ENCODE measurements at regions of chr3 and their contacts with region 1.

Region 1: GRCh38 chr3:107216711-107217110 is 160.5 kb upstream of the CCDC54 start:
- DNase-seq: no peak
- H3K4me3 ChIP-seq: no peak overlapping the region
- H3K27ac ChIP-seq: peak overlapping the region; percentile 93
- H3K27me3 ChIP-seq: no peaks in the 10 kb centered on the region
- CTCF ChIP-seq: no peak

Region 2: GRCh38 chr3:107082527-107082926 is 134.2 kb before region 1 on chr3:
- CTCF ChIA-PET with region 1: no interaction called
- POLR2A ChIA-PET with region 1: no interaction called
- DNase-seq: no peak
- H3K4me3 ChIP-seq: no peak overlapping the region
- H3K27ac ChIP-seq: no peak overlapping the region
- H3K27me3 ChIP-seq: no peaks in the 10 kb centered on the region
- CTCF ChIP-seq: no peak

Region 3: GRCh38 chr3:107172411-107172810 is 44.3 kb before region 1 on chr3:
- CTCF ChIA-PET with region 1: no interaction called
- POLR2A ChIA-PET with region 1: no interaction called
- DNase-seq: no peak
- H3K4me3 ChIP-seq: no peak overlapping the region
- H3K27ac ChIP-seq: no peak overlapping the region
- H3K27me3 ChIP-seq: peaks cover 5% of the 10 kb centered on the region
- CTCF ChIP-seq: no peak

Region 4: GRCh38 chr3:107206141-107206540 is 10.6 kb before region 1 on chr3:
- CTCF ChIA-PET with region 1: interaction called, 10 read pairs
- POLR2A ChIA-PET with region 1: interaction called, 4 read pairs
- DNase-seq: no peak
- H3K4me3 ChIP-seq: no peak overlapping the region
- H3K27ac ChIP-seq: no peak overlapping the region
- H3K27me3 ChIP-seq: no peaks in the 10 kb centered on the region
- CTCF ChIP-seq: peak; percentile 63

Region 5: DNA sequence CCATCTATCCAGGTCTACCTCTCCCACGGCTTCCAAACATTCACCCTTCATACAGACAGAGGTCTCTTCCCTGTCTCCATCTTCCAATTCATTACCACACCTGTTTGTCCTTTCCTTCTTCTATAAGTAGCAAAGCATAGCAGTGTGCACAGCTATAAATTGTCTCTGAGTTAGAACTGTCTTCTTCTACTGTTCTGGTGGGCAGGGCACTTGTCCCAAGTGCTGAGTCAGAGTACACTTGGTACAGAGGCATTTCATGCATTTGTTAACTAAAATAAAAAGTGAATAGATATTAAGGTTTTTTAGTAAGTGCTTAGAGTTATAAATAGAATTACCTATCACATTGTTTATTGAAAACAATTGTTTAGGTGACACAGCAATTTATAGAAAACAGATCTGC is 10.4 kb after region 1 on chr3:
- CTCF ChIA-PET with region 1: no interaction called
- POLR2A ChIA-PET with region 1: no interaction called
- DNase-seq: no peak
- H3K4me3 ChIP-seq: no peak overlapping the region
- H3K27ac ChIP-seq: no peak overlapping the region
- H3K27me3 ChIP-seq: no peaks in the 10 kb centered on the region
- CTCF ChIP-seq: no peak